B cell (primary cell): ENCODE measurements at regions of chr12 and their contacts with region 1.

Region 1: DNA sequence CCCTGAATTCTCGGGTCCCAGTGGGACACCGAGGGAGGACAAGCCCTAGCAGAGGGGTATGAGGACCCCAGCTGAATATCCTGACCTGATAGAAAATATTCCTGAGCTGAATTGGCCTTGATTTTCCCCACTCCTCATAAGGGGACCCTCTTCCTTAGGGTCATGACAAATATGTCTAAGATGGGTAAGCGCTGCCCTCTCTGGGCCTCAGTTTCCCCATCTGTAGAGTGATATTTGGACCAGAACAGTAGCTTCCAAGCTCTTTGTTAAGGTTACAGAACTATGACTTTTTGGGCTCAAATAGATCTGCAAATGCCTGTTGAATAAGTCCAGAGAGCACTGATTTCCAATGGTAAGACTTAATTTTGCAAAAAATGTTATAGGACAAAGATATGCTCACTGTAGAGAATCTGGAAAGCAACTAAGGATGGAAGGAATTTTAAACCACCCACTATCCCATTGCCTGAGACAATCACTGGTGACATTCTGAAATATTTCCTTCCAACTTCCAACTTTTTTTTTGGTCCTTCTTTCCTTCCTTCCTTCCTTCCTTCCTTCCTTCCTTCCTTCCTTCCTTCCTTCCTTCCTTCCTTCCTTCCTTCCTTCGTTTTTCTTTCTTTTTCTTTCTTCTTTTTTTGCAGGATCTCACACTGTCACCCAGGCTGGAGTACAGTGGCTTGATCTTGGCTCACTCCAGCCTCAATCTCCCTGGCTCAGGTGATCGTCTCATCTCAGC is 32.0 kb downstream of the MYL2 start:
- DNase-seq: no peak
- ATAC-seq: no peak
- H3K4me3 ChIP-seq: peak overlapping the region in 1 of 5 experiments; percentile 62
- H3K4me3 Mint-ChIP-seq: peak overlapping the region; percentile 95
- H3K27ac ChIP-seq: no peak overlapping the region
- H3K27ac Mint-ChIP-seq: peak overlapping the region; percentile 43
- H3K4me1 ChIP-seq: peaks cover 0 to 10% of the 10 kb centered on the region in 2 donors
- H3K4me1 Mint-ChIP-seq: peaks cover 4% of the 10 kb centered on the region
- H3K27me3 ChIP-seq: no peaks in the 10 kb centered on the region
- H3K27me3 Mint-ChIP-seq: no peaks in the 10 kb centered on the region
- CTCF ChIP-seq: peak; percentile 62

Region 2: DNA sequence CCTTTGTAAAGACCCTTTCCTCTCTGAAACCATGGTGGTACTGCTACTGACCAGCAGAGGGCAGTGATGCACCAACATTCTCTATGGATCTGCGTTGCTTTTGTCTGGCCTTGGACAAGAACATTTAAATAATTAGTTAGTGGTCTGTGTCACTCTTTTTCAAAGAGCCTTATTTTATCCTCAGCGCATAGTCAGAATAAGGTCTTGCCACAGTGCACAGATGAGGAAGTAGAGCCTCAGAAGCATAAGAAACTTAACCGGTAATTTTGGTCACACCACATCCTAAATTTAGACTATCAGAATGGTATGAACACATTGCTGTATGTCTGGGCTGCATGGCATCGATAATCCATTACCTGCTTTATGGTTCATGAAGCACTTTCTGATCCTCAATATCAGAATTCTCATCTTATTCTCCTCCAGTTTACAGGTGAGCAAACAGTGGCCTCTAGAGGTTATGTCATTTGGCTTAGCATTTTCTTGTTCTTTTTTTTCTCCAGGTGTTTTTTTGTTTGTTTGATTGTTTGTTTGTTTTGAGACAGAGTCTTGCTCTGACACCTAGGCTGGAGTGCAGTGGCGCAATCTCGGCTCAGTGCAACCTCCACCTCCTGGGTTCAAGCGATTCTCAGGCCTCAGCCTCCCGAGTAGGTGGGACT is 788.0 kb before region 1 on chr12:
- CTCF ChIA-PET with region 1: interaction called, 13 read pairs
- POLR2A ChIA-PET with region 1: no interaction called
- intact Hi-C with region 1: loop called (anchors 1 kb)
- DNase-seq: peak; percentile 91
- ATAC-seq: peak; percentile 98
- H3K4me3 ChIP-seq: peak overlapping the region in 2 of 5 experiments; percentile 15 to 21
- H3K4me3 Mint-ChIP-seq: peak overlapping the region; percentile 67
- H3K27ac ChIP-seq: peak overlapping the region; percentile 72 to 73
- H3K27ac Mint-ChIP-seq: peak overlapping the region; percentile 81
- H3K4me1 ChIP-seq: peaks cover 21 to 22% of the 10 kb centered on the region in 2 donors
- H3K4me1 Mint-ChIP-seq: peaks cover 24% of the 10 kb centered on the region
- H3K27me3 ChIP-seq: no peaks in the 10 kb centered on the region
- H3K27me3 Mint-ChIP-seq: no peaks in the 10 kb centered on the region
- CTCF ChIP-seq: peak; percentile 93

Region 3: DNA sequence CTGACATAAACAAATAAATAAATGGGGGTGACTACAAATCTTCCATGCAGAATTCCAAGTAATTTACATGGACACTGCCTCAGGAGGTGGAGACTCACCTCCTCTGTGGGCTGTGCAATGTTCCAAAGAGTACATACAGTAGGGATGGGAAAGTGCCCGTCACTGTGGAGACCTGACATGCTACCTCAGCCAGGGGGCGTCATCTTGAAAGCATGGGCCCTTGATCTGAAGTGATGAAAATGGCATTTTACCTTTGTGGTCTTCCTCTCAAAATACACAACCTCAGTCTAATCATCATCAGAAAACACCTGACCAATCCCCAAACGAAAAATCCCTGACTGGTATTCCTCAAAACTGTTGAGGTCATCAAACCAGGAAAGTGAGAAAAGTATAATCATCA is 533.4 kb before region 1 on chr12:
- CTCF ChIA-PET with region 1: interaction called, 4 read pairs
- POLR2A ChIA-PET with region 1: no interaction called
- intact Hi-C with region 1: loop called (anchors 1 kb)
- DNase-seq: peak; percentile 55
- ATAC-seq: peak; percentile 62
- H3K4me3 ChIP-seq: no peak overlapping the region
- H3K4me3 Mint-ChIP-seq: no peak overlapping the region
- H3K27ac ChIP-seq: no peak overlapping the region
- H3K27ac Mint-ChIP-seq: no peak overlapping the region
- H3K4me1 ChIP-seq: peaks cover 2 to 6% of the 10 kb centered on the region in 2 donors
- H3K4me1 Mint-ChIP-seq: peaks cover 15% of the 10 kb centered on the region
- H3K27me3 ChIP-seq: peaks cover 0 to 3% (median 0%) of the 10 kb centered on the region in 4 experiments
- H3K27me3 Mint-ChIP-seq: no peaks in the 10 kb centered on the region
- CTCF ChIP-seq: peak; percentile 61

Region 4: DNA sequence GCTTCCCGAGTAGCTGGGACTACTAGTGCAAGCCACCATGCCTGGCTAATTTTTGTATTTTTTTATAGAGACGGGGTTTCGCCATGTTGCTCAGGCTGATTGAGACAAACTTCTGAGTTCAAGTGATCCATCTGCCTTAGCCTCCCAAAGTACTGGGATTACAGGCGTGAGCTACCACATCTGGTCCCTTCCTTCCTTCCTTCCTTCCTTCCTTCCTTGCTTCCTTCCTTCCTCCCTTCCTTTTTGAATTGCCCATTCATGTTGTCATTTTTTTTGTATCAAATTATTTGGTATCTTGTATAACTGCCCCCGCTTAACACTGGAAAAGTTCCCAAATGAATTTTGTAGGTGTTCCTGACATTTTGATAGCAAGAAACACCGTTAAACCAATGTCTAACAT is 374.6 kb before region 1 on chr12:
- CTCF ChIA-PET with region 1: interaction called, 18 read pairs
- POLR2A ChIA-PET with region 1: no interaction called
- intact Hi-C with region 1: no loop called
- DNase-seq: no peak
- ATAC-seq: no peak
- H3K4me3 ChIP-seq: no peak overlapping the region
- H3K4me3 Mint-ChIP-seq: no peak overlapping the region
- H3K27ac ChIP-seq: no peak overlapping the region
- H3K27ac Mint-ChIP-seq: no peak overlapping the region
- H3K4me1 ChIP-seq: no peaks in the 10 kb centered on the region
- H3K4me1 Mint-ChIP-seq: no peaks in the 10 kb centered on the region
- H3K27me3 ChIP-seq: no peaks in the 10 kb centered on the region
- H3K27me3 Mint-ChIP-seq: no peaks in the 10 kb centered on the region
- CTCF ChIP-seq: no peak

Region 5: GRCh38 chr12:110813285-110813684 is 75.1 kb before region 1 on chr12:
- CTCF ChIA-PET with region 1: no interaction called
- POLR2A ChIA-PET with region 1: no interaction called
- intact Hi-C with region 1: no loop called
- DNase-seq: no peak
- ATAC-seq: no peak
- H3K4me3 ChIP-seq: no peak overlapping the region
- H3K4me3 Mint-ChIP-seq: no peak overlapping the region
- H3K27ac ChIP-seq: no peak overlapping the region
- H3K27ac Mint-ChIP-seq: no peak overlapping the region
- H3K4me1 ChIP-seq: peaks cover 0 to 5% of the 10 kb centered on the region in 2 donors
- H3K4me1 Mint-ChIP-seq: peaks cover 2% of the 10 kb centered on the region
- H3K27me3 ChIP-seq: peaks cover 0 to 6% (median 1%) of the 10 kb centered on the region in 4 experiments
- H3K27me3 Mint-ChIP-seq: peaks cover 15% of the 10 kb centered on the region
- CTCF ChIP-seq: no peak